CD4-positive, alpha-beta T cell (primary cell): ENCODE measurements at regions of chr1 and their contacts with region 1.

Region 1: DNA sequence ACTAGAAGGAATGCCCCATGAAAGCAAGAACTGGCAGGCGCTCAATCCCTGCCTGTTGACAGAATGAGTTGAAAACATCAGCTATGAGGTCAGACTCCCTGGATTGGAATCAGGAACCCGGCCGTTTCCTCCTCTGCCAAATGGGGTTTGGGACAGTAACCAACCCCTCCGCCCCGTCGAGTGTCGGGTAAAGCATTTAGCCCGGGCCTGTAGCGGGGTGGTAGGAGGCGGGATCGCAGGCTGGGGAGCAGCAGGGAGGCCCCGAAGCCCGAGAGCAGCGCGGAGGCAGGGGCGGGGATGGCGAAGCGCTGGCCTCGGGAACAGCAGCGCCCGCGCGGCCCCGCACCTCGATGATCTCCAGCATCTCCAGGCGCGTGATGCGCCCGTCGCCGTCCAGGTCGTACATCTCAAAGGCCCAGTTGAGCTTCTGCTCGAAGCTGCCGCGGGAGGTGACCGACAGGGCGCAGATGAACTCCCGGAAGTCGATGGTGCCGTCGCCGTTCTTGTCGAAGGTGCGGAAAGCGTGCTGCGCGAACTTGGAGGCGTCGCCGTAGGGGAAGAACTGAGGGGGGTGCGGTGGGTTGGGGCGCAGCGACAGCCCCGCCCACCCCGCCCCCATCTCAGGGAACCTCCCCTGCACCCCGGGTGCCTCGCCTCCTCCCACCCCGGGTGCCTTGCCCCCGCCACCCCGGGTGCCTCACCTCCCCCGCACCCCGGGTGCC is 7.5 kb downstream of the HPCAL4 start:
- DNase-seq: peak; percentile 38 to 82 (median 57)
- ATAC-seq: peak; percentile 74
- H3K4me3 ChIP-seq: peak overlapping the region; percentile 19
- H3K4me3 Mint-ChIP-seq: no peak overlapping the region
- H3K27ac ChIP-seq: no peak overlapping the region
- H3K27ac Mint-ChIP-seq: peak overlapping the region; percentile 72
- H3K4me1 ChIP-seq: peaks cover 32% of the 10 kb centered on the region
- H3K4me1 Mint-ChIP-seq: peaks cover 44% of the 10 kb centered on the region
- H3K27me3 ChIP-seq: peaks cover 0 to 2% of the 10 kb centered on the region in 2 experiments
- H3K27me3 Mint-ChIP-seq: peaks cover 27% of the 10 kb centered on the region
- CTCF ChIP-seq: no peak

Region 2: GRCh38 chr1:38559161-38559824 is 1124.5 kb before region 1 on chr1:
- CTCF ChIA-PET with region 1: no interaction called
- POLR2A ChIA-PET with region 1: no interaction called
- intact Hi-C with region 1: loop called in 1 of 2 experiments (anchors 5 kb)
- DNase-seq: peak; percentile 72 to 95 (median 84)
- ATAC-seq: peak; percentile 89
- H3K4me3 ChIP-seq: peak overlapping the region; percentile 4
- H3K4me3 Mint-ChIP-seq: peak overlapping the region; percentile 78
- H3K27ac ChIP-seq: no peak overlapping the region
- H3K27ac Mint-ChIP-seq: peak overlapping the region; percentile 90
- H3K4me1 ChIP-seq: peaks cover 55% of the 10 kb centered on the region
- H3K4me1 Mint-ChIP-seq: peaks cover 75% of the 10 kb centered on the region
- H3K27me3 ChIP-seq: peaks cover 6 to 9% of the 10 kb centered on the region in 2 experiments
- H3K27me3 Mint-ChIP-seq: peaks cover 27% of the 10 kb centered on the region
- CTCF ChIP-seq: no peak

Region 3: DNA sequence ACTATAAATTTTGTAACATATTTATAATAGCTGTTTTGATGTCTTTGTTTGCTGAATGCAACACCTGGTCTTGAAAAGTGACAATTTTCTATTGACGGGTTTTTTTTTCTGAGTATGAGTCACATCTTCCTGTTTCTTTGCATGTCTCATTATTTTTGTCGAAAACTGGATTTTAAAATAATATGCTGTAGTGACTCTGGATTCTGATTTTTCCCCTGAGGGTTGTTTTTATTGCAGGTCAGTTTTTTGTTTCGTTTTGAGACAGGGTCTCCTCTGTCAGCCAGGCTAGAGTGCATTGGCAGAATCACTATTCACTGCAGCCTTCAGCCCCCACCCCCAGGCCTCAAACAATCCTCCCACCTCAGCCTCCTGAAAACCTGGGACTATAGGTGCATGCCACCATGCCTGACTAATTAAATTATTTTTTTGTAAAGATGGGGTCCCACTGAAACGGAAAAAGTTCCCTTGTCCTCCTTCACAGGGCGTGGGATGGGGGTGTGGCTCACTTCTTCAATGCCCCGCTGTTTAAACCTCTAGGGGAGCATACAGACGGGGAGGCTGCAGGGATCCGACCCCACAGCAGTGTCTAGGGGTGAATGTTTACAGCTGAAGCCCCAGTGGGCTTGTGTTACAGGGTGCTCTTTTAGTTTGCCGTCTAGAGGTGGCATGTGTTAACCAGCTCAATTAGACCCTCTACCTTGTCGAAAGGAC is 43.6 kb after region 1 on chr1:
- CTCF ChIA-PET with region 1: no interaction called
- POLR2A ChIA-PET with region 1: no interaction called
- intact Hi-C with region 1: no loop called
- DNase-seq: no peak
- ATAC-seq: no peak
- H3K4me3 ChIP-seq: no peak overlapping the region
- H3K4me3 Mint-ChIP-seq: no peak overlapping the region
- H3K27ac ChIP-seq: no peak overlapping the region
- H3K27ac Mint-ChIP-seq: no peak overlapping the region
- H3K4me1 ChIP-seq: no peaks in the 10 kb centered on the region
- H3K4me1 Mint-ChIP-seq: no peaks in the 10 kb centered on the region
- H3K27me3 ChIP-seq: peaks cover 24 to 49% of the 10 kb centered on the region in 2 experiments
- H3K27me3 Mint-ChIP-seq: peaks cover 71% of the 10 kb centered on the region
- CTCF ChIP-seq: no peak